ENCODE measurements at regions of chr11 and their contacts with region 1.

Region 1: GRCh38 chr11:65013692-65014145 is 241 bp upstream of the ARL2 start:
- DNase-seq: peak; percentile 98
- H3K4me3 ChIP-seq: peak overlapping the region; percentile 69 to 70
- H3K27ac ChIP-seq: peak overlapping the region; percentile 95
- H3K4me1 ChIP-seq: peaks cover 4% of the 10 kb centered on the region in 2 experiments; a peak in 2 of 4 replicates
- H3K27me3 ChIP-seq: no peaks in the 10 kb centered on the region
- CTCF ChIP-seq: peak; percentile 70
- EP300 ChIP-seq: no peak
- RAD21 ChIP-seq: no peak; the same call in 1 of the 2 replicates

Region 2: DNA sequence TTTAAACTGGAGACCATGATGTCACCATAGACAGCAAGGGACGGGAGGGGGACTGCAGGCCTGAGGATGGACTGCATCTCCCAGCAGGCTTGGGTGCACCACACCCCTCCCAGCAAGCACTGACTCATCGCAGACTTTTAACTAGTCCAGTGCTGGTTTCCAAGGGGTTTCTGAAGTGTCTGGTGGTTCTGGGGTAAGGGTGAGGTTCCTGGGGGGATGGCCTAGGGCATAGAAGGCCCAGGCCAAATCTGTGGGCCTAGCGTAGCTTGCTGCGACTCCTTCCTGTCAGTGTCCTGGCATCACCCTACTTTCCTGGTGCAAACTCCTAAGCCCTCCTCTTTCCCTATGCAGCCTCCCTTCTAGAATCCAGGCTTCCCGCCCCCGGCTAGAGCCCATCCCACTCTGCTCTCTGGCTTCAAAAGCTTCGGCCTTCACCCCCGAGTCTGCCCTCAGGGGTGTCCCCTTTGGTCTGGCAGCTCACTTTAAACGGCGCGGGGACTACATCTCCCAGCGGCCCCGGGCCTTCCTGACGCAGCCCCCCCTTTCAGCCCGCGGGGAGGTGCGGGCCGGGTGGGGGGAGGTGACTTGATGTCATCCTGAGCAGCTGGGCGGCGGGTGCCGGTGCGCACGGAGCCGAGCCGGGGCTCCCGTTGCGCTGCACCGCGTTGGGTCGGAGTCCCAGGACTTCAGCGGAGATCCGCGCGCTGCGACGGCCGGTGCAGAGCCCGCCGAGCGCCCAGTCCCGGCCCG is 89.4 kb before region 1 on chr11 and contains the start of gene PPP2R5B:
- CTCF ChIA-PET with region 1: interaction called, 14 read pairs
- POLR2A ChIA-PET with region 1: no interaction called
- DNase-seq: peak; percentile 97
- H3K4me3 ChIP-seq: peak within 1 kb of the TSS; percentile 67 to 93
- H3K27ac ChIP-seq: peak within 1 kb of the TSS; percentile 73 to 95
- H3K4me1 ChIP-seq: peaks cover 0 to 22% of the 10 kb centered on the region in 2 experiments; a peak in 1 of 4 replicates
- H3K27me3 ChIP-seq: no peaks in the 10 kb centered on the region
- CTCF ChIP-seq: no peak
- EP300 ChIP-seq: no peak
- RAD21 ChIP-seq: no peak
- polyA plus RNA-seq, gene PPP2R5B: 15.1 and 16.7 TPM in 2 replicates

Region 3: DNA sequence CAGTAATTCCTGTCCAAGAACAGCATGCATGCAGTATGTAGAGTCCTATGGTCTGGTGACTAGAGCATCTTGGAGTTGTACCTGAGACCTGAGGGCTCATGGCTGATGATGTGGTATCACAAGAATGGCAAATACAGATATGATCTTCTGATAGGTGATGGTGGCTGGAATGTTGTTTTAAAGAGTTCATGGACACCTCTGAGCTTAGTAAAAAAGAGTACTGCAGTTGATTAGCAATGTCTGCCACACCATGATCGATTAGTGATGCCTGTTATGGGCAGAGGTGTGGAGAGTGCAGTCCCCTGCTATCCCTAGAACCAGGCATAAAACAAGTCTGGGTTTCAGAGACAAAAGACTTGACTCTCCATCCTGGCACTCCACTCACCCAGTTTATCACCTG is 15.6 kb before region 1 on chr11:
- CTCF ChIA-PET with region 1: interaction called, 26 read pairs
- POLR2A ChIA-PET with region 1: no interaction called
- DNase-seq: peak; percentile 40
- H3K4me3 ChIP-seq: no peak overlapping the region
- H3K27ac ChIP-seq: no peak overlapping the region
- H3K4me1 ChIP-seq: no peaks in the 10 kb centered on the region; a peak in 1 of 4 replicates
- H3K27me3 ChIP-seq: no peaks in the 10 kb centered on the region
- CTCF ChIP-seq: no peak
- EP300 ChIP-seq: no peak
- RAD21 ChIP-seq: no peak

Region 4: GRCh38 chr11:65027213-65028067 is 13.7 kb after region 1 on chr11 and contains the start of gene SNX15:
- CTCF ChIA-PET with region 1: interaction called, 56 read pairs
- POLR2A ChIA-PET with region 1: interaction called, 5 read pairs
- DNase-seq: peak; percentile 93
- H3K4me3 ChIP-seq: peak within 1 kb of the TSS; percentile 60 to 71
- H3K27ac ChIP-seq: peak within 1 kb of the TSS; percentile 67 to 91
- H3K4me1 ChIP-seq: peaks cover 0 to 5% of the 10 kb centered on the region in 2 experiments; a peak in 2 of 4 replicates
- H3K27me3 ChIP-seq: no peaks in the 10 kb centered on the region
- CTCF ChIP-seq: peak; percentile 60
- EP300 ChIP-seq: peak in 1 of 2 experiments; percentile 9; a peak in 1 of 4 replicates
- RAD21 ChIP-seq: peak; percentile 20; the same call in 1 of the 2 replicates
- polyA plus RNA-seq, gene SNX15: 9.0 and 17.2 TPM in 2 replicates

Region 5: GRCh38 chr11:65083834-65084597 is 70.3 kb after region 1 on chr11 and contains the starts of genes CDCA5 and ZFPL1:
- CTCF ChIA-PET with region 1: interaction called, 11 read pairs
- POLR2A ChIA-PET with region 1: no interaction called
- DNase-seq: peak; percentile 99
- H3K4me3 ChIP-seq: peak within 1 kb of the TSS; percentile 87 to 92
- H3K27ac ChIP-seq: peak within 1 kb of the TSS; percentile 88 to 93
- H3K4me1 ChIP-seq: peaks cover 8 to 20% of the 10 kb centered on the region in 2 experiments
- H3K27me3 ChIP-seq: no peaks in the 10 kb centered on the region
- CTCF ChIP-seq: no peak
- EP300 ChIP-seq: 0 out of 4 replicates have a peak, but pooled peaks of 1 of the 2 experiments have one; percentile 6
- RAD21 ChIP-seq: no peak
- polyA plus RNA-seq, gene CDCA5: 13.1 and 16.3 TPM in 2 replicates
- polyA plus RNA-seq, gene ZFPL1: 55.7 and 75.9 TPM in 2 replicates

Region 6: GRCh38 chr11:65117216-65118096 is 103.7 kb after region 1 on chr11 and contains the start of gene ZNHIT2:
- CTCF ChIA-PET with region 1: interaction called, 43 read pairs
- POLR2A ChIA-PET with region 1: interaction called, 5 read pairs
- DNase-seq: peak; percentile 94
- H3K4me3 ChIP-seq: peak within 1 kb of the TSS; percentile 74 to 86
- H3K27ac ChIP-seq: peak within 1 kb of the TSS; percentile 67 to 89
- H3K4me1 ChIP-seq: peaks cover 22 to 51% of the 10 kb centered on the region in 2 experiments; a peak in 3 of 4 replicates
- H3K27me3 ChIP-seq: no peaks in the 10 kb centered on the region
- CTCF ChIP-seq: peak; percentile 90
- EP300 ChIP-seq: 0 out of 4 replicates have a peak, but pooled peaks of 1 of the 2 experiments have one; percentile 18
- RAD21 ChIP-seq: peak; percentile 84
- polyA plus RNA-seq, gene ZNHIT2: 5.6 and 5.9 TPM in 2 replicates

Measured in SK-N-SH (cell line).